MCF 10A (cell line): ENCODE measurements at regions of chr11 and their contacts with region 1.

Region 1: GRCh38 chr11:128956401-128957201 is 13.9 kb upstream of the TP53AIP1 start:
- DNase-seq: peak; percentile 81
- H3K4me3 Mint-ChIP-seq: no peak overlapping the region
- H3K27ac Mint-ChIP-seq: no peak overlapping the region
- H3K4me1 Mint-ChIP-seq: peaks cover 7% of the 10 kb centered on the region
- H3K27me3 Mint-ChIP-seq: no peaks in the 10 kb centered on the region
- CTCF ChIP-seq: peak; percentile 73

Region 2: GRCh38 chr11:128026596-128026995 is 930.0 kb before region 1 on chr11:
- CTCF ChIA-PET with region 1: no interaction called
- POLR2A ChIA-PET with region 1: no interaction called
- intact Hi-C with region 1: loop called (anchors 5 kb)
- DNase-seq: peak; percentile 98
- H3K4me3 Mint-ChIP-seq: peak overlapping the region; percentile 30
- H3K27ac Mint-ChIP-seq: peak overlapping the region; percentile 28
- H3K4me1 Mint-ChIP-seq: peaks cover 42% of the 10 kb centered on the region
- H3K27me3 Mint-ChIP-seq: no peaks in the 10 kb centered on the region
- CTCF ChIP-seq: no peak

Region 3: GRCh38 chr11:128653801-128654231 is 302.8 kb before region 1 on chr11:
- CTCF ChIA-PET with region 1: no interaction called
- POLR2A ChIA-PET with region 1: no interaction called
- intact Hi-C with region 1: loop called (anchors 5 kb)
- DNase-seq: peak; percentile 27
- H3K4me3 Mint-ChIP-seq: no peak overlapping the region
- H3K27ac Mint-ChIP-seq: peak overlapping the region; percentile 5
- H3K4me1 Mint-ChIP-seq: peaks cover 7% of the 10 kb centered on the region
- H3K27me3 Mint-ChIP-seq: peaks cover 7% of the 10 kb centered on the region
- CTCF ChIP-seq: no peak

Region 4: DNA sequence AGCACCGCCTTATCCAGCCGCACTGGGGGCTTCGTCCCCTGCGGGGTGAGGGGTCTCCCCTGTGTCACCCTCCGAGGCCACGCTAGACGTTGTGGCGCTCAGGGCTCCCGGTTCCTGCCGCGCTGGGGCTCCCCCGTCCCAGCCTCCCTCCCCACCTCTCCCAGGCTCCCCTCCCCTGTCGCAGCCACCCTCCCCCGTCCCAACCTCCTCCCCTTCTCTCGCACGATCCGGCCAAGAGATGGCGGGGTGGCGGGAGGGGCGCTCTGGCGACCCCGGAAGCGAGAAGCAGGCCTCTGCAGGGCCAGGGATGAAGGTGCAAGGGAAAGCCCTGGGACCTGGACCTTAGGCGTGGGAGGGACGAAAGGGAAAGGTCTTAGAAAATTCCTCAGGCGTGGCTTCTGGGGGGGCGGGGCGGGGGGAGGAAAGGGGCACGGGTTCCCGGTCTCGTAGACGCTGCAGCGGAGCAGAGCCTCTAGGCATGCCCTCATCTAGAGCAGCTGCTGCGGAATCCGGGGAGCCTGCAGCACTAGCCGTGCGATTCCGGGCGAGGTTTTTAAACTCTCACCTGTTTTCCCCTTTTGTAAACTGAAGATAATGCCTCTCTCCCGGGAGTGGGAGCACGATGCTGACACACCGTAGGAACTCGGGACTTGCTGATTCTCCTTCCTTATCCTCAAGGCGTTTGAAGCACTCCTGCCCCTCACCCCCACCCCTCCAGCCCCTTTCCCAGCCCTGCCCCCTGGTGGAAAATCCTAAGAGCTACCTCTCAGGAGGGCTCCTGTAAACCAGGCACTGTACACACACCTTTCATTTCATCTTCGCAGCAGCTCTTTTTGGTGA is 51.0 kb before region 1 on chr11:
- CTCF ChIA-PET with region 1: interaction called, 32 read pairs
- POLR2A ChIA-PET with region 1: interaction called, 4 read pairs
- intact Hi-C with region 1: loop called (anchors 1 kb)
- DNase-seq: peak; percentile 71
- H3K4me3 Mint-ChIP-seq: peak overlapping the region; percentile 72
- H3K27ac Mint-ChIP-seq: peak overlapping the region; percentile 57
- H3K4me1 Mint-ChIP-seq: peaks cover 48% of the 10 kb centered on the region
- H3K27me3 Mint-ChIP-seq: no peaks in the 10 kb centered on the region
- CTCF ChIP-seq: peak; percentile 43

Region 5: DNA sequence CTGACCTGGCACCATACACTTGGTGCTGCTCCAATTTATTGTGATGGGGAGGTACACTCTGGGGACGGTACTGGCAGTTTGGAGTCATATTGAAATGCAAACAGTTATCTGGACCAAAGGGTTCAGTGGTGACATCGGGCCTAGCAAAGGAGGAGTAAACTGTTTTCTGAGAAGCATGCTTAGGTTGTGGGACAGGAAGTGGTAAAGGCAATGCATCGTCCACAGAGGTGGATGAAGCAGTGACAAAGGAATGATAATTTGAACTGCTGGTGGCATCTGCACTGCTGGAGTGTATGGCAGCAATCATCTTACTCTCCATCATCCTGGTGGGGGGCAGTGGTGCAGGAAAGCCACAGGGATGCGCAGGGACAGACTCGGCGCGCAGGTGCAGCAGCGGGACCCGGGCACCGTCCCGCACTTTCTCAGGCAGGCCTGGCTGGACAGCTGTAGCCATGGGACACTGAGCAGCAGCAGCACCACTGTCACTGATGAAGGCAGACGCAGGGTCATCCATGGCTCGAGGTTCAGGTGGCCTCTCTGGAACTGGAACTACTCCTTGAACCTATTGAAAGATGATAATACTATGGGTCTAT is 14.1 kb after region 1 on chr11:
- CTCF ChIA-PET with region 1: interaction called, 10 read pairs
- POLR2A ChIA-PET with region 1: no interaction called
- intact Hi-C with region 1: no loop called
- DNase-seq: no peak
- H3K4me3 Mint-ChIP-seq: no peak overlapping the region
- H3K27ac Mint-ChIP-seq: no peak overlapping the region
- H3K4me1 Mint-ChIP-seq: no peaks in the 10 kb centered on the region
- H3K27me3 Mint-ChIP-seq: no peaks in the 10 kb centered on the region
- CTCF ChIP-seq: no peak